ENCODE measurements at regions of chr6 and their contacts with region 1.

Region 1: DNA sequence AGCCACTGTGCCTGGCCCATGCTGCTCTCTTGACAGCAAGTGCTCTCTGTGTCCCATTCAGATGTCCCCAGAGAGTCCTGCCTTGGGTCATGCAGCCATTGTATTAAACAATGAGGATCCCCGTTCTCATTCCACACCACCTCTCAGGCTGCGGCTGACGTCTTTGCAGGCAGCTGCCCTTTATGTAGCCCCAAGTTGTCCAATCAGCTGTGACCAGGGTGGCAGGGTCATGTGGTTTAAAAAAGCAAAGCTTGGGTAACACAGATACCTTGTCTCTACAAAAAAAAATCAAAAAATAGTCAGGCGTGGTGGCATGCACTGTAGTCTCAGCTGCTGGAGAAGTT is 13.2 kb downstream of the GCNT2 start:
- DNase-seq: no peak
- ATAC-seq: no peak
- H3K4me3 ChIP-seq: no peak overlapping the region
- H3K27ac ChIP-seq: no peak overlapping the region
- H3K4me1 ChIP-seq: peaks cover 28% of the 10 kb centered on the region
- H3K27me3 ChIP-seq: no peaks in the 10 kb centered on the region
- CTCF ChIP-seq: no peak
- EP300 ChIP-seq: no peak
- POLR2A ChIP-seq: no peak
- RAD21 ChIP-seq: no peak

Region 2: GRCh38 chr6:10355115-10355702 is 179.2 kb before region 1 on chr6:
- CTCF ChIA-PET with region 1: no interaction called
- POLR2A ChIA-PET with region 1: no interaction called
- in situ Hi-C with region 1: no loop called
- intact Hi-C with region 1: no loop called
- DNase-seq: no peak
- ATAC-seq: peak; percentile 41; the same call in 2 of the 3 replicates
- H3K4me3 ChIP-seq: no peak overlapping the region
- H3K27ac ChIP-seq: no peak overlapping the region
- H3K4me1 ChIP-seq: peaks cover 8% of the 10 kb centered on the region; the same call in 1 of the 2 replicates
- H3K27me3 ChIP-seq: no peaks in the 10 kb centered on the region
- CTCF ChIP-seq: no peak
- EP300 ChIP-seq: no peak
- POLR2A ChIP-seq: no peak
- RAD21 ChIP-seq: no peak

Region 3: GRCh38 chr6:10487668-10488327 is 46.6 kb before region 1 on chr6:
- CTCF ChIA-PET with region 1: no interaction called
- POLR2A ChIA-PET with region 1: no interaction called
- in situ Hi-C with region 1: no loop called
- intact Hi-C with region 1: no loop called
- DNase-seq: no peak
- ATAC-seq: peak; percentile 20; the same call in 1 of the 3 replicates
- H3K4me3 ChIP-seq: no peak overlapping the region
- H3K27ac ChIP-seq: no peak overlapping the region
- H3K4me1 ChIP-seq: no peaks in the 10 kb centered on the region
- H3K27me3 ChIP-seq: no peaks in the 10 kb centered on the region; a peak in 2 of 5 replicates
- CTCF ChIP-seq: no peak
- EP300 ChIP-seq: no peak
- POLR2A ChIP-seq: no peak
- RAD21 ChIP-seq: no peak

Region 4: GRCh38 chr6:10521104-10521808 is 13.1 kb before region 1 on chr6 and contains the start of gene GCNT2:
- CTCF ChIA-PET with region 1: no interaction called
- POLR2A ChIA-PET with region 1: interaction called, 9 read pairs
- in situ Hi-C with region 1: no loop called
- intact Hi-C with region 1: loop called (anchors 1 kb)
- DNase-seq: peak; percentile 92
- ATAC-seq: peak; percentile 83
- H3K4me3 ChIP-seq: peak within 1 kb of the TSS; percentile 34 to 61 (median 50)
- H3K27ac ChIP-seq: peak within 1 kb of the TSS; percentile 30
- H3K4me1 ChIP-seq: peaks cover 42% of the 10 kb centered on the region
- H3K27me3 ChIP-seq: no peaks in the 10 kb centered on the region
- CTCF ChIP-seq: 0 out of 2 replicates have a peak, but pooled peaks have one; percentile 3
- EP300 ChIP-seq: no peak
- POLR2A ChIP-seq: peak in 1 of 2 experiments; percentile 52; a peak in 2 of 4 replicates
- RAD21 ChIP-seq: no peak
- total RNA-seq, gene GCNT2: 25.1 and 31.9 TPM in 2 replicates

Region 5: DNA sequence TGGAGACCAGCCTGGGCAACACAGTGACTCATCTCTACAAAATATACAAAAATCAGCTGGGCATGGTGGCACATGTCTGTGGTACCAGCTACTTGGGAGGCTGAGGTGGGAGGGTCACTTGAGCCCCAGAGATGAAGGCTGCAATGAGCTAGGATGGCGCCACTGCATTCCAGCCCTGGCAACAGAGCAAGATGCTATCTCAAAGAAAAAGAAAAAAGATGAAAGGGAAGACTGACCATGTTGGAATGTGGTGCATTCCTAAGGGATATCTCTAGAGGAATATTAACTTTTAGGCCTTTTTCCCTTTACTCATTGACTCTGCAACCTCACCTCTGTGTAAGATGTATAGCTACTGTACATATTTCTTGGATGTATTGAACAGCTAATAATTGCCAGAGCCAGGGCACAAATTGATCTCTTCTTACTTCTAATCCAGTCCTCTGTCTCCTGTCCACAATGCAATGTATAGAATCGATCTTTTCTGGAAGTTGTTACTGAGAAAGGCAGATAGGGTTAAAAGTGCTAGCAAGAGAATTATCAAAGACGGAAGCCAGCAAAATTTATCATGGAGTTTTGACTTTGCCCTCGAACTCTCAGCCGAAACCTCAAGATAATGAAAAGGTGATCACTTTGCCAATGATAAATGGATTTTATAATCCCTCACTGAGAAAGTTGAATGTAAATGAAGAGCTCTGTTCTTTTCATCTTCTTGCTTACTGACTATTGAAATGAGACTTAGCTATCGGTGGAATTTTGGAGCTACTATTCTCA is 33.0 kb after region 1 on chr6:
- CTCF ChIA-PET with region 1: no interaction called
- POLR2A ChIA-PET with region 1: no interaction called
- in situ Hi-C with region 1: no loop called
- intact Hi-C with region 1: loop called (anchors 5 kb)
- DNase-seq: peak; percentile 88
- ATAC-seq: peak; percentile 83
- H3K4me3 ChIP-seq: no peak overlapping the region
- H3K27ac ChIP-seq: no peak overlapping the region
- H3K4me1 ChIP-seq: peaks cover 19% of the 10 kb centered on the region
- H3K27me3 ChIP-seq: no peaks in the 10 kb centered on the region
- CTCF ChIP-seq: no peak
- EP300 ChIP-seq: peak in 1 of 2 experiments; percentile 58; a peak in 1 of 4 replicates
- POLR2A ChIP-seq: no peak
- RAD21 ChIP-seq: no peak

Region 6: DNA sequence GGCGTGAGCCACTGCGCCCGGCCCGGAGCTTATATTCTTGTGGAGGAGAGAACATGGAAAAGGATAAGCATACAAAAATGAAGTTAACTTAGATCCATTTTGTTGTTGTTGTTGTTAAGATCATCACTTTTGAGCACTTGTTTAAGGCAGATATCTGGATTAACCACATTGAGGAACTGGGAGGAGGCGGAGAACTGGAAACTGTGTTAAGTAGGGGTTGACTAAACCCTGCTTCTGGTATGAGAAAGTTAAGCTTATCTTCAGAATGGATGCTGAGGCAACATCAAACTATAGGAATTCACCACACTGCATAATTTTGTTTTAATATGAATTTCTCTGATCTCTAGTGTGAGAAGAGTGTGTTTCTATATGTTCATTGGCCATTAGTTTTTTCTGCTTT is 44.3 kb after region 1 on chr6:
- CTCF ChIA-PET with region 1: no interaction called
- POLR2A ChIA-PET with region 1: no interaction called
- in situ Hi-C with region 1: no loop called
- intact Hi-C with region 1: no loop called
- DNase-seq: no peak
- ATAC-seq: no peak
- H3K4me3 ChIP-seq: no peak overlapping the region
- H3K27ac ChIP-seq: no peak overlapping the region
- H3K4me1 ChIP-seq: peaks cover 13% of the 10 kb centered on the region
- H3K27me3 ChIP-seq: no peaks in the 10 kb centered on the region
- CTCF ChIP-seq: no peak
- EP300 ChIP-seq: no peak
- POLR2A ChIP-seq: no peak
- RAD21 ChIP-seq: no peak

Measured in HepG2 (cell line).